A549 (cell line): ENCODE measurements at regions of chr7 and their contacts with region 1.

Region 1: GRCh38 chr7:95511716-95512260 is 26.0 kb downstream of the ASB4 start:
- DNase-seq: peak; percentile 53 to 85
- ATAC-seq: peak; percentile 94 to 99
- H3K4me3 ChIP-seq: no peak overlapping the region
- H3K27ac ChIP-seq: peak overlapping the region; percentile 54 to 74
- H3K4me1 ChIP-seq: peaks cover 5% of the 10 kb centered on the region; the same call in 1 of the 3 replicates
- CTCF ChIP-seq: peak; percentile 80
- EP300 ChIP-seq: no peak
- POLR2A ChIP-seq: no peak
- RAD21 ChIP-seq: peak; percentile 73 to 77

Region 2: GRCh38 chr7:95491634-95492320 is 20.0 kb before region 1 on chr7:
- CTCF ChIA-PET with region 1: interaction called, 14 read pairs
- POLR2A ChIA-PET with region 1: no interaction called
- DNase-seq: peak in 1 of 2 experiments; percentile 34
- ATAC-seq: peak; percentile 24 to 51; a peak in 3 of 6 replicates
- H3K4me3 ChIP-seq: no peak overlapping the region
- H3K27ac ChIP-seq: peak overlapping the region; percentile 19 to 75; a peak in 5 of 6 replicates
- H3K4me1 ChIP-seq: peaks cover 45% of the 10 kb centered on the region
- CTCF ChIP-seq: no peak
- EP300 ChIP-seq: no peak
- POLR2A ChIP-seq: no peak
- RAD21 ChIP-seq: no peak

Region 3: GRCh38 chr7:95527033-95527775 is 15.4 kb after region 1 on chr7:
- CTCF ChIA-PET with region 1: interaction called, 67 read pairs
- POLR2A ChIA-PET with region 1: no interaction called
- DNase-seq: peak; percentile 73 to 75
- ATAC-seq: peak; percentile 90 to 95
- H3K4me3 ChIP-seq: no peak overlapping the region
- H3K27ac ChIP-seq: peak overlapping the region; percentile 49 to 72
- H3K4me1 ChIP-seq: peaks cover 21% of the 10 kb centered on the region
- CTCF ChIP-seq: peak; percentile 94
- EP300 ChIP-seq: no peak
- POLR2A ChIP-seq: no peak
- RAD21 ChIP-seq: peak; percentile 97 to 98

Region 4: DNA sequence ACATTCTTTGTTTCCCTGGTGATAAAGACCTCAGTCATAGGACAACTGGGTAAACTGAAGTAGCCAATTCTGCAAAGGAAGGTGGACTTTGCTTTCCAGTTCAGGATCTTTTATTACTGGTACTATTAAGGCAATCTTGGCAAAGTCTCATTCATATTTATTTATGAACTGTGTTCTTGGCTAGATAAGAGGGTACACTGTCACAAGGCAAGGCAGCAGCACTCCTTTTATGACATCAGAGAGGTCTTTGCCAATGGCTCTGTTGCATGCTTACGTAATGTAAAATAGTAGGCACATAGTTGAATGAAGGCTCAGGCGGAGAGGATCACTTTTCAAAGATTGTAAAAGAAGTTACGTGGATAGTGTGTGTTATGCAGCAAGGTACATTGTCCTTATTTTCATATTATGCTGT is 148.2 kb after region 1 on chr7:
- CTCF ChIA-PET with region 1: no interaction called
- POLR2A ChIA-PET with region 1: interaction called, 14 read pairs
- DNase-seq: peak in 1 of 2 experiments; percentile 24
- ATAC-seq: no peak
- H3K4me3 ChIP-seq: no peak overlapping the region
- H3K27ac ChIP-seq: no peak overlapping the region; a peak in 1 of 6 replicates
- H3K4me1 ChIP-seq: no peaks in the 10 kb centered on the region
- CTCF ChIP-seq: no peak
- EP300 ChIP-seq: no peak
- POLR2A ChIP-seq: no peak
- RAD21 ChIP-seq: no peak

Region 5: GRCh38 chr7:95675016-95675415 is 163.2 kb after region 1 on chr7:
- CTCF ChIA-PET with region 1: interaction called, 10 read pairs
- POLR2A ChIA-PET with region 1: no interaction called
- DNase-seq: no peak
- ATAC-seq: no peak
- H3K4me3 ChIP-seq: no peak overlapping the region
- H3K27ac ChIP-seq: no peak overlapping the region
- H3K4me1 ChIP-seq: no peaks in the 10 kb centered on the region
- CTCF ChIP-seq: no peak
- EP300 ChIP-seq: no peak
- POLR2A ChIP-seq: no peak
- RAD21 ChIP-seq: no peak

Region 6: GRCh38 chr7:95684037-95684436 is 172.2 kb after region 1 on chr7:
- CTCF ChIA-PET with region 1: interaction called, 201 read pairs
- POLR2A ChIA-PET with region 1: interaction called, 5 read pairs
- DNase-seq: peak; percentile 18 to 31
- ATAC-seq: peak in 1 of 2 experiments; percentile 56; a peak in 3 of 6 replicates
- H3K4me3 ChIP-seq: no peak overlapping the region
- H3K27ac ChIP-seq: peak overlapping the region; percentile 47 to 58; a peak in 5 of 6 replicates
- H3K4me1 ChIP-seq: peaks cover 13% of the 10 kb centered on the region; the same call in 2 of the 3 replicates
- CTCF ChIP-seq: peak; percentile 32; the same call in 1 of the 3 replicates
- EP300 ChIP-seq: no peak
- POLR2A ChIP-seq: no peak
- RAD21 ChIP-seq: peak; percentile 37 to 42; a peak in 3 of 5 replicates